Naive thymus-derived CD4-positive, alpha-beta T cell (primary cell): ENCODE measurements at regions of chr20 and their contacts with region 1.

Region 1: GRCh38 chr20:53216856-53217576 is 244.9 kb downstream of the TSHZ2 start:
- DNase-seq: peak; percentile 65 to 86 (median 79)
- ATAC-seq: peak; percentile 91
- H3K4me3 ChIP-seq: peak overlapping the region; percentile 34
- H3K4me3 Mint-ChIP-seq: peak overlapping the region; percentile 48 to 80 (median 74)
- H3K27ac ChIP-seq: peak overlapping the region; percentile 48
- H3K27ac Mint-ChIP-seq: peak overlapping the region; percentile 44 to 97 (median 74)
- H3K4me1 ChIP-seq: peaks cover 0 to 33% of the 10 kb centered on the region in 2 donors
- H3K4me1 Mint-ChIP-seq: peaks cover 14 to 46% (median 41%) of the 10 kb centered on the region in 7 donors
- H3K27me3 ChIP-seq: no peaks in the 10 kb centered on the region
- H3K27me3 Mint-ChIP-seq: peaks cover 0 to 4% (median 0%) of the 10 kb centered on the region in 5 donors

Region 2: GRCh38 chr20:52242237-52243230 is 974.5 kb before region 1 on chr20:
- CTCF ChIA-PET with region 1: interaction called, 5 read pairs
- POLR2A ChIA-PET with region 1: no interaction called
- intact Hi-C with region 1: loop called (anchors 1 to 2 kb)
- DNase-seq: peak in 6 of 9 donors; percentile 26 to 59 (median 45)
- ATAC-seq: peak; percentile 34
- H3K4me3 ChIP-seq: no peak overlapping the region
- H3K4me3 Mint-ChIP-seq: no peak overlapping the region
- H3K27ac ChIP-seq: no peak overlapping the region
- H3K27ac Mint-ChIP-seq: peak overlapping the region in 1 of 9 donors; percentile 22
- H3K4me1 ChIP-seq: no peaks in the 10 kb centered on the region
- H3K4me1 Mint-ChIP-seq: peaks cover 0 to 11% (median 2%) of the 10 kb centered on the region in 7 donors
- H3K27me3 ChIP-seq: no peaks in the 10 kb centered on the region
- H3K27me3 Mint-ChIP-seq: peaks cover 0 to 11% (median 2%) of the 10 kb centered on the region in 5 donors

Region 3: GRCh38 chr20:52410182-52410647 is 806.8 kb before region 1 on chr20:
- CTCF ChIA-PET with region 1: interaction called, 3 read pairs
- POLR2A ChIA-PET with region 1: interaction called, 7 read pairs
- intact Hi-C with region 1: loop called in 1 of 2 experiments (anchors 1 kb)
- DNase-seq: peak in 8 of 9 donors; percentile 18 to 93 (median 87)
- ATAC-seq: peak; percentile 94
- H3K4me3 ChIP-seq: peak overlapping the region; percentile 30
- H3K4me3 Mint-ChIP-seq: peak overlapping the region; percentile 63 to 87 (median 82)
- H3K27ac ChIP-seq: peak overlapping the region; percentile 94
- H3K27ac Mint-ChIP-seq: peak overlapping the region; percentile 94 to 100 (median 99)
- H3K4me1 ChIP-seq: peaks cover 68 to 73% of the 10 kb centered on the region in 2 donors
- H3K4me1 Mint-ChIP-seq: peaks cover 34 to 88% (median 76%) of the 10 kb centered on the region in 7 donors
- H3K27me3 ChIP-seq: no peaks in the 10 kb centered on the region
- H3K27me3 Mint-ChIP-seq: no peaks in the 10 kb centered on the region

Region 4: DNA sequence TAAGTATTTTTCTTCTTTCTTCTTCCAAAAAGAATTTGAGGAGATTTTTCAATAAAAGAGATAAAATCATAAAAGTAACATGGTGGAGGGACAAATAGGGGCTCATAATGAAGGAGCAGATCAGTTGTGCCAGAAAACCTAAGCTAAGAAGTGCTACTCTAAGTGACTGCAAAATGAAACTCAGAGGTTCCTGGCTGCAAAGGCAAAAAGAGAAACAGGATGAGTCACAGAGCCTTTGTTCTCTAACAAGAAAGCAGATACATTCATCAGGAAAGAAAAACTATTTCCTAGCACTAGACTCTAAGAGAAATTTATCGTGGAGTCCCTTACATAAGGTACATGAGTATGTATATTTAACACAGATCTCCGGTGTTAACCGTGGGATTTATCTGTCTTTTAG is 195.1 kb before region 1 on chr20:
- CTCF ChIA-PET with region 1: no interaction called
- POLR2A ChIA-PET with region 1: no interaction called
- intact Hi-C with region 1: loop called in 1 of 2 experiments (anchors 2 kb)
- DNase-seq: peak in 2 of 9 donors; percentile 21 to 27
- ATAC-seq: peak; percentile 46
- H3K4me3 ChIP-seq: no peak overlapping the region
- H3K4me3 Mint-ChIP-seq: peak overlapping the region in 7 of 10 donors; percentile 14 to 73 (median 57)
- H3K27ac ChIP-seq: no peak overlapping the region
- H3K27ac Mint-ChIP-seq: peak overlapping the region; percentile 39 to 96 (median 67)
- H3K4me1 ChIP-seq: peaks cover 0 to 16% of the 10 kb centered on the region in 2 donors
- H3K4me1 Mint-ChIP-seq: peaks cover 23 to 76% (median 62%) of the 10 kb centered on the region in 7 donors
- H3K27me3 ChIP-seq: no peaks in the 10 kb centered on the region
- H3K27me3 Mint-ChIP-seq: no peaks in the 10 kb centered on the region

Region 5: DNA sequence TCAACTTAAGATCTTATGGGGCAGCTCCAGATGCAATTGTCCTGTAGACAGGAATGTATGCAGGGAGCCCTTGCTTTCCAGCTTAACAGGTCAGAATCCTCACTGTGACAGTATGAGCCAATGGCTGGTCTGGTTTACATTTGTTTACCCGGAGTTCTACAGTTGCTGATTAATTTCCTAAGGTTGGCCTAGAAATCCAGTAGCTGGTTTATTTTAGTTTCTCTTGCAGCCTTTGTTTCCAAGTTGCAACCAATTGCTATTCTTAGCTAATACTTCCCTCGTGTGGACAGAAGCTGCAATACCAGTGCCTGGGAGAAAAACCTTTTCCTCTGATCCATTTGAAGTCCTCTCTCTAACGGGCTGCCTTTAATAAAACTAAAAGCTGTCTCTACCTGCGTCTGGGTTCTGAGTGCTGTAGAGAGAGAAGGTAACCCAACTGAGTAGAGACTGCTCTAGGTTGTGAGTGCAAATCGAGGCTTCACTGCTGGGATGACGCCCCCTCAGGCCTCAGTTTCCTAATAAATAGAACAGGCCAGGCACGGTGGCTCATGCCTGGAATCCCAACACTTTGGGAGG is 330.7 kb after region 1 on chr20:
- CTCF ChIA-PET with region 1: interaction called, 9 read pairs
- POLR2A ChIA-PET with region 1: no interaction called
- intact Hi-C with region 1: loop called in 1 of 2 experiments (anchors 2 kb)
- DNase-seq: peak in 8 of 9 donors; percentile 27 to 61 (median 50)
- ATAC-seq: peak; percentile 54
- H3K4me3 ChIP-seq: no peak overlapping the region
- H3K4me3 Mint-ChIP-seq: no peak overlapping the region
- H3K27ac ChIP-seq: no peak overlapping the region
- H3K27ac Mint-ChIP-seq: no peak overlapping the region
- H3K4me1 ChIP-seq: no peaks in the 10 kb centered on the region
- H3K4me1 Mint-ChIP-seq: peaks cover 0 to 6% (median 5%) of the 10 kb centered on the region in 7 donors
- H3K27me3 ChIP-seq: no peaks in the 10 kb centered on the region
- H3K27me3 Mint-ChIP-seq: no peaks in the 10 kb centered on the region

Region 6: DNA sequence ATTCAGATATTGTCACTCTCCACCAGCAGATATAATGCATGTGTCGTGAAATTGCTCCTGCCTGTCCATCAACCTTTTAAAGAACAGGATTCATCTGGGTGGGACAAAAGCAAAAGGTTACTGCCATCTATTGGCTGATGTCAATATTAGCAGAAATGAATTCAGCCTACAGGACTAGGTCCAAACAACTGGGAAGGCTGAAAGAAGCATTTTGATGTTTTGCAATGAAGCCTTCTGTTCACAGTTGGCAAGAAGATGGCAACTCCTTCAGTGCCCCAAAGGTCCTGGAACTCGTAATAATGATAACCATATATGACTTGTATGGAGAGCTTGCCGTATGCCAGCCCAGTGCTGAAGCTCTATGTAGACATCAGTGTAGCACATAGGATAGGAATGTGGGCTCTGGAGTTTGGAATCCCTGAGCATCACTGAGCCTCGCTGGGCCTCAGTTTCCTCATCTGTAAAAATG is 845.8 kb after region 1 on chr20:
- CTCF ChIA-PET with region 1: no interaction called
- POLR2A ChIA-PET with region 1: no interaction called
- intact Hi-C with region 1: loop called in 1 of 2 experiments (anchors 10 kb)
- DNase-seq: peak in 6 of 9 donors; percentile 8 to 40 (median 26)
- ATAC-seq: peak; percentile 61
- H3K4me3 ChIP-seq: no peak overlapping the region
- H3K4me3 Mint-ChIP-seq: no peak overlapping the region
- H3K27ac ChIP-seq: no peak overlapping the region
- H3K27ac Mint-ChIP-seq: no peak overlapping the region
- H3K4me1 ChIP-seq: peaks cover 0 to 9% of the 10 kb centered on the region in 2 donors
- H3K4me1 Mint-ChIP-seq: peaks cover 0 to 11% (median 7%) of the 10 kb centered on the region in 7 donors
- H3K27me3 ChIP-seq: no peaks in the 10 kb centered on the region
- H3K27me3 Mint-ChIP-seq: no peaks in the 10 kb centered on the region